CD8-positive, alpha-beta T cell (primary cell): ENCODE measurements at regions of chr10 and their contacts with region 1.

Region 1: DNA sequence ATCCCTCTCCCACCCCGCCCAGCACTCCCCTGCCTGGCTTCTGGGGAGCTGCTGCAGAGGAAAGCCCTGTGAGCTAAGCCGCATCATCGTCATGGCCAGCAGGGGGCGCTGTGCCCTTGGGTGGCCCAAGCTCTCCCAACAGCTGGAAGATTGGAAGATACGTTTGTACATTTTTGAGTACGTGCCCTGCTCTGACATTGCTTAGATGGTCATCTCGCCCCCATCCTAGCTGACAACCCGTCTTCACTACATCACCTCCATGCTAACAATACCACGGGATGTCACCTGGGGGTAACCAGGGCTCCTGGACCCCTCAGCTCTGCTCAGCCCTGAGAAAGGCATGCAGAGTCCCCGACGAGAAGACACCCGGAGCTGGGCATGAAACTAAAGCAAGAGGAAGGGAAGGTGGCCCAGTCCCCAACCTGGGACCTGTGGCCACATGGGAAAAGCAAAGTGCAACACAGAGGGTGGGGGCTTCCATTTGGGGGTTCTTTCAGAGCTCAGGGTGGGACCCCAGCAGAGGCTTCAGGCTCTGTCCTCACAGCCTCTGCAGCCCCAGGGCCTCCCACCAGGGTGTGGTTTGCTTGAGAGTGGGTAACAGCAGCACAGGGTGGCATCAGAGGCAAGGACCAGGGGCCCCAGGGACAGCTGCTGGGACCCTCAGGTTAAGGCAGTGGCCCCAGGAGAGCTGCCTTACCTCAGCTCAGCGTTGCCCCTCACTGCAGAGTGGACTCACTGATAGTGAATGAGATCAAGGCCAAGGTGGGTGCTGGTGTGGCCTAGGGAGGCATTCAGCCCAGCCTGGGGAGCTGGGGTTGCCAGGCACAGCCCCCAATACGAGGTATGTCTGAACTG is 136.7 kb downstream of the PTPN20 start:
- DNase-seq: peak; percentile 42 to 87 (median 72)
- ATAC-seq: peak; percentile 65
- H3K4me3 ChIP-seq: no peak overlapping the region
- H3K4me3 Mint-ChIP-seq: no peak overlapping the region
- H3K27ac ChIP-seq: no peak overlapping the region
- H3K27ac Mint-ChIP-seq: peak overlapping the region; percentile 49
- H3K4me1 ChIP-seq: peaks cover 16% of the 10 kb centered on the region
- H3K4me1 Mint-ChIP-seq: peaks cover 21% of the 10 kb centered on the region
- H3K27me3 ChIP-seq: no peaks in the 10 kb centered on the region
- H3K27me3 Mint-ChIP-seq: no peaks in the 10 kb centered on the region
- CTCF ChIP-seq: peak; percentile 73

Region 2: DNA sequence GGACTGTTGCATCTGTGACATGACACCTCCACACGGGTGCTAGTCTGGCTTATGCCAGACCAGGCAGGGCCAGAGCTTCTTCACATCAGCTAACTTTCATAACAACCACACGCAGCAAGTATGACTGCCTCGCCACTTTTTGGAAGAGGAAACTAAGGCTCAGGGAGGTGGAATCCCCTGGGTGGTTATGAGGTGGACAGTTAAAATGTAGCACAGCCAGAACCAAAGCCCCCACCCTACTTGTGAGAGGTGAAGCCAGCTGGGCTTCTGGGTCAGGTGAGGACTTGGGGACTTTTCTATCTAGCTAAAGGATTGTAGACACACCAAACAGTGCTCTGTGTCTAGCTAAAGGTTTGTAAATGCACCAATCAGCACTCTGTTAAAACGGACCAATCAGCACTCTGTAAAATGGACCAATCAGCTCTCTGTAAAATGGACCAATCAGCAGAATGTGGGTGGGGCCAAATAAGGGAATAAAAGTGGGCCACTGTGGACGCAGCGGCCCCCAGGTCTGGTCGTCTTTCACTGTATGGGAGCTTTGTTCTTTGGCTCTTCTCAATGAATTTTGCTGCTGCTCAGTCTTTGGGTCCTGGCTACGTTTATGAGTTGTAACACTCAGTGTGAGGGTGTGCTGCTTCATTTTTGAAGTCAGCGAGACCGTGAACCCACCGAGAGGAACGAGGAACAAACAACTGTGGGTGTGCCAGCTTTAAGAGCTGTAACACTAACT is 34.3 kb after region 1 on chr10:
- CTCF ChIA-PET with region 1: no interaction called
- POLR2A ChIA-PET with region 1: no interaction called
- intact Hi-C with region 1: no loop called
- DNase-seq: no peak
- ATAC-seq: no peak
- H3K4me3 ChIP-seq: no peak overlapping the region
- H3K4me3 Mint-ChIP-seq: no peak overlapping the region
- H3K27ac ChIP-seq: no peak overlapping the region
- H3K27ac Mint-ChIP-seq: no peak overlapping the region
- H3K4me1 ChIP-seq: peaks cover 8% of the 10 kb centered on the region
- H3K4me1 Mint-ChIP-seq: peaks cover 17% of the 10 kb centered on the region
- H3K27me3 ChIP-seq: no peaks in the 10 kb centered on the region
- H3K27me3 Mint-ChIP-seq: no peaks in the 10 kb centered on the region
- CTCF ChIP-seq: no peak

Region 3: DNA sequence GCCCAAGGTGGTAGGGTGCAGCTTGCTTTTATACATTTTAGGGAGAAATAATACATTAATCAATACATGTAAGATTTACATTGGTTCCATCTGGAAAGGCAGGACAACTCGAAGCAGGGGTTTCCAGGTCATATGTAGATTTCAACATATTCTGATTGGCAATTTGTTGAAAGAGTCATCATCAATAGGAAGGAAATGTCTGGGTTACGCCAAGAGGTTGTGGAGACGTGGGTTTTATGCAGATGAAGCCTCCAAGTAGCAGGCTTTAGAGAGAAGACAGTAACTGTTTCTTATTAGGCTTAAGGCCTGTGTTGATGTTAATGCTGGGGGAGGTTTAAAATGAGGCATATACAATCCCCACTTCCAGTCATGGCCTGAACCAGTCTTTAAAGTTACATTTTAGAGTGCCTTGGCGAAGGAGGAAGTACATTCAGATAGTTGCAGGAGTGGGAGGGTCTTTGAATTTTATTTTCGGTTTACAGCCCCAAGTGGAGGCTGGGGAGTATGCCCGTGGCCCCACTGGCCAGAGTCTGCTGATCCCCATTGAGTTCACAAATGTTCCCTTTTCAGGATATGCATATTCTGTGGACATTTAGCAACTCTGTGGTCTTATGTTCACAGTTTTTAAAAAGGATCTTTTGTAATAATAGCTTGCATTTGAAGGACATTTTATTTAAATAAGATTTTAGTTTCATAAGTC is 86.1 kb after region 1 on chr10:
- CTCF ChIA-PET with region 1: no interaction called
- POLR2A ChIA-PET with region 1: no interaction called
- intact Hi-C with region 1: no loop called
- DNase-seq: no peak
- ATAC-seq: no peak
- H3K4me3 ChIP-seq: no peak overlapping the region
- H3K4me3 Mint-ChIP-seq: no peak overlapping the region
- H3K27ac ChIP-seq: no peak overlapping the region
- H3K27ac Mint-ChIP-seq: peak overlapping the region; percentile 1
- H3K4me1 ChIP-seq: no peaks in the 10 kb centered on the region
- H3K4me1 Mint-ChIP-seq: peaks cover 7% of the 10 kb centered on the region
- H3K27me3 ChIP-seq: no peaks in the 10 kb centered on the region
- H3K27me3 Mint-ChIP-seq: no peaks in the 10 kb centered on the region
- CTCF ChIP-seq: no peak

Region 4: GRCh38 chr10:47165711-47166524 is 118.0 kb after region 1 on chr10:
- CTCF ChIA-PET with region 1: interaction called, 12 read pairs
- POLR2A ChIA-PET with region 1: no interaction called
- intact Hi-C with region 1: loop called (anchors 1 to 5 kb)
- DNase-seq: peak in 8 of 9 experiments; percentile 34 to 79 (median 52)
- ATAC-seq: peak; percentile 85
- H3K4me3 ChIP-seq: peak overlapping the region; percentile 48 to 73
- H3K4me3 Mint-ChIP-seq: peak overlapping the region; percentile 85
- H3K27ac ChIP-seq: peak overlapping the region; percentile 74 to 79
- H3K27ac Mint-ChIP-seq: peak overlapping the region; percentile 98
- H3K4me1 ChIP-seq: peaks cover 23% of the 10 kb centered on the region
- H3K4me1 Mint-ChIP-seq: peaks cover 31% of the 10 kb centered on the region
- H3K27me3 ChIP-seq: no peaks in the 10 kb centered on the region
- H3K27me3 Mint-ChIP-seq: no peaks in the 10 kb centered on the region
- CTCF ChIP-seq: no peak

Region 5: GRCh38 chr10:47176206-47176902 is 128.5 kb after region 1 on chr10:
- CTCF ChIA-PET with region 1: no interaction called
- POLR2A ChIA-PET with region 1: no interaction called
- intact Hi-C with region 1: no loop called
- DNase-seq: no peak
- ATAC-seq: no peak
- H3K4me3 ChIP-seq: no peak overlapping the region
- H3K4me3 Mint-ChIP-seq: no peak overlapping the region
- H3K27ac ChIP-seq: no peak overlapping the region
- H3K27ac Mint-ChIP-seq: no peak overlapping the region
- H3K4me1 ChIP-seq: no peaks in the 10 kb centered on the region
- H3K4me1 Mint-ChIP-seq: peaks cover 2% of the 10 kb centered on the region
- H3K27me3 ChIP-seq: no peaks in the 10 kb centered on the region
- H3K27me3 Mint-ChIP-seq: no peaks in the 10 kb centered on the region
- CTCF ChIP-seq: no peak

Region 6: GRCh38 chr10:47269294-47269693 is 221.4 kb after region 1 on chr10:
- CTCF ChIA-PET with region 1: interaction called, 6 read pairs
- POLR2A ChIA-PET with region 1: no interaction called
- intact Hi-C with region 1: loop called in 1 of 2 experiments (anchors 1 kb)
- DNase-seq: peak in 2 of 9 experiments; percentile 8 to 32
- ATAC-seq: no peak
- H3K4me3 ChIP-seq: no peak overlapping the region
- H3K4me3 Mint-ChIP-seq: no peak overlapping the region
- H3K27ac ChIP-seq: no peak overlapping the region
- H3K27ac Mint-ChIP-seq: no peak overlapping the region
- H3K4me1 ChIP-seq: peaks cover 22% of the 10 kb centered on the region
- H3K4me1 Mint-ChIP-seq: peaks cover 42% of the 10 kb centered on the region
- H3K27me3 ChIP-seq: no peaks in the 10 kb centered on the region
- H3K27me3 Mint-ChIP-seq: no peaks in the 10 kb centered on the region
- CTCF ChIP-seq: no peak

Region 7: DNA sequence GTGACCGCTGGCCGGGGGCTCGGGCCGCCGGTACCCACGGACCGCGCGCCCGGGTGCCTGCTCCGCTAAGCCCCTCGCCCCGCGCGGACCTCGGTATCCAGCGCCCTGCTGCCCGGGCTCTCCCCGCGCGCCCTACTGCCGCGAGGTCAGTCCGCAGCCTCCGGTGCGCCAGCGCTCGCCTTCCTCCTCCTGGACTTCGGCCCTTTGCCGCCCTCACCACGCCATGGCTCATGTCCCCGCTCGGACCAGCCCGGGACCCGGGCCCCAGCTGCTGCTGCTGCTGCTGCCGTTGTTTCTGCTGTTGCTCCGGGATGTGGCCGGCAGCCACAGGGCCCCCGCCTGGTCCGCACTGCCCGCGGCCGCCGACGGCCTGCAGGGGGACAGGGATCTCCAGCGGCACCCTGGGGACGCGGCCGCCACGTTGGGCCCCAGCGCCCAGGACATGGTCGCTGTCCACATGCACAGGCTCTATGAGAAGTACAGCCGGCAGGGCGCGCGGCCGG is 252.6 kb after region 1 on chr10:
- CTCF ChIA-PET with region 1: interaction called, 24 read pairs
- POLR2A ChIA-PET with region 1: no interaction called
- intact Hi-C with region 1: no loop called
- DNase-seq: no peak
- ATAC-seq: peak; percentile 16
- H3K4me3 ChIP-seq: peak overlapping the region; percentile 20 to 56
- H3K4me3 Mint-ChIP-seq: peak overlapping the region; percentile 85
- H3K27ac ChIP-seq: no peak overlapping the region
- H3K27ac Mint-ChIP-seq: no peak overlapping the region
- H3K4me1 ChIP-seq: peaks cover 14% of the 10 kb centered on the region
- H3K4me1 Mint-ChIP-seq: peaks cover 27% of the 10 kb centered on the region
- H3K27me3 ChIP-seq: peaks cover 0 to 2% of the 10 kb centered on the region in 2 experiments
- H3K27me3 Mint-ChIP-seq: peaks cover 8% of the 10 kb centered on the region
- CTCF ChIP-seq: no peak

Region 8: GRCh38 chr10:47340608-47341170 is 292.8 kb after region 1 on chr10:
- CTCF ChIA-PET with region 1: interaction called, 5 read pairs
- POLR2A ChIA-PET with region 1: no interaction called
- intact Hi-C with region 1: loop called (anchors 1 kb)
- DNase-seq: peak; percentile 52 to 82 (median 70)
- ATAC-seq: peak; percentile 77
- H3K4me3 ChIP-seq: no peak overlapping the region
- H3K4me3 Mint-ChIP-seq: no peak overlapping the region
- H3K27ac ChIP-seq: no peak overlapping the region
- H3K27ac Mint-ChIP-seq: no peak overlapping the region
- H3K4me1 ChIP-seq: no peaks in the 10 kb centered on the region
- H3K4me1 Mint-ChIP-seq: no peaks in the 10 kb centered on the region
- H3K27me3 ChIP-seq: no peaks in the 10 kb centered on the region
- H3K27me3 Mint-ChIP-seq: peaks cover 3% of the 10 kb centered on the region
- CTCF ChIP-seq: peak; percentile 97